Activated CD4-positive, alpha-beta T cell treated with anti-CD3 and anti-CD28 coated beads for 36 hours (primary cell): ENCODE measurements at regions of chr7 and their contacts with region 1.

Region 1: DNA sequence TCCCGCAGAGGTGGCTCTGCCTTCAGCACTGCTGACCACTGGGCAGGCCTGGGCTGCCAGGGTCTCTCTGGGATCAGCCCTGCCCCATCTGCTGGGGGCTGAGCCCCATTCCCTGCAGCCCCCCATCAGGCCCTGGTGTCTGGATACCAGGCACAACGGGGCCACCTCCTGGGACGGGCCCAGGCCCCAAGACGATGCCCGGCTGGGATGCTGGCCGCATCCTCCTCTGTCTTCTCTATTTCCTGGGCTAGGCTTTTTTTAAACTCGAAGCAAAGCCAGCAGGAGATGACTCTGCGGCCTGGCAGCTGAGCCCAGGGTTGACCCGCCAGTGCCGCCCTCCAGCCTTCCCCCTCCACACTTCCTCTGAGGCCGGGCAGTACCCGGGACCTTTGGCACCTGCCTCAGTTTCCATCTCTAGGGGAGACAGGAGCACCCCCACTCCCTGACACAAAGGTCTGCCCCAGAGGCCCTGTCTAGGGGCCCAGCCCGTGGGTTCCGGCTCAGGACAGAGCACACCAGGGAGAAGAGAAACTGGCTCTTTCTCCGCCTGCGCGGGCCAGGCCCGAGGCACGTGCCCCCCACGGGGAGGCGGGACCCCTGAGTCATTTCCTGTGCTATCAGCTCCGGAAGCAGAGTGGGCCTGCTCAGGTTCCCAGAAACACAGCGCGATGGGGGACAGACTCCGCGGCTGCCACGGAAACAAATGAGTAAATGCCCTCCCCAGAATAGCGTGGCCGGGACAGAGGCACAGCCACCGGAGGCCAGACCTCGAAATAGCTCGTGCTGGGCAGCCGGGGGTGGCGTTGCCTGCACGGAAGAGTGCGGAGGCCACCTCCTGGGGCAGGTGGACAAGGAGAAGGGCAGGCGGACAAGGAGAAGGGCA is 84.6 kb upstream of the PDGFA start:
- DNase-seq: peak; percentile 97
- ATAC-seq: peak; percentile 59
- H3K4me3 Mint-ChIP-seq: peak overlapping the region; percentile 78
- H3K27ac Mint-ChIP-seq: peak overlapping the region; percentile 100
- H3K4me1 Mint-ChIP-seq: peaks cover 68% of the 10 kb centered on the region
- H3K27me3 Mint-ChIP-seq: no peaks in the 10 kb centered on the region

Region 2: GRCh38 chr7:362402-363096 is 241.7 kb before region 1 on chr7:
- CTCF ChIA-PET with region 1: no interaction called
- POLR2A ChIA-PET with region 1: no interaction called
- intact Hi-C with region 1: loop called (anchors 5 kb)
- DNase-seq: peak; percentile 67
- ATAC-seq: peak; percentile 65
- H3K4me3 Mint-ChIP-seq: peak overlapping the region; percentile 62
- H3K27ac Mint-ChIP-seq: peak overlapping the region; percentile 90
- H3K4me1 Mint-ChIP-seq: peaks cover 67% of the 10 kb centered on the region
- H3K27me3 Mint-ChIP-seq: no peaks in the 10 kb centered on the region

Region 3: GRCh38 chr7:418647-419280 is 185.5 kb before region 1 on chr7:
- CTCF ChIA-PET with region 1: no interaction called
- POLR2A ChIA-PET with region 1: no interaction called
- intact Hi-C with region 1: no loop called
- DNase-seq: no peak
- ATAC-seq: no peak
- H3K4me3 Mint-ChIP-seq: no peak overlapping the region
- H3K27ac Mint-ChIP-seq: no peak overlapping the region
- H3K4me1 Mint-ChIP-seq: no peaks in the 10 kb centered on the region
- H3K27me3 Mint-ChIP-seq: no peaks in the 10 kb centered on the region

Region 4: DNA sequence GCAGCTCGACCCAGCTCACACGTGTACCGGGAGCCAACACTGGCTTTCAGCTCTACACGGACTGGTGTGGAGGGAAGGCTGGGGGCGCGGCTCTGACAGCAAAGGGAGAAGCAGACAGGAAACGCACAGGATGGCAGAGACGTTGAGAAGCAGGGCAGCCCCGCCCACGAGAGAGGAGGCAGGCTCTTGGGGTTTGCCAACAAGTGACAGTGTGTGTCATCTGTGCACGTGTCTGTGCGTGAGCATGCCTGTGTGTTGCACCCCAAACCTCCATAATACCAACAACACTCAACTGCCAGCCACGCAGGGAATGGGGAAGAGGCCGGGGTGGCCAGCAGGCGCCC is 20.1 kb before region 1 on chr7:
- CTCF ChIA-PET with region 1: interaction called, 3 read pairs
- POLR2A ChIA-PET with region 1: interaction called, 4 read pairs
- intact Hi-C with region 1: loop called (anchors 1 kb)
- DNase-seq: peak; percentile 95
- ATAC-seq: peak; percentile 90
- H3K4me3 Mint-ChIP-seq: peak overlapping the region; percentile 77
- H3K27ac Mint-ChIP-seq: peak overlapping the region; percentile 96
- H3K4me1 Mint-ChIP-seq: peaks cover 37% of the 10 kb centered on the region
- H3K27me3 Mint-ChIP-seq: no peaks in the 10 kb centered on the region

Region 5: DNA sequence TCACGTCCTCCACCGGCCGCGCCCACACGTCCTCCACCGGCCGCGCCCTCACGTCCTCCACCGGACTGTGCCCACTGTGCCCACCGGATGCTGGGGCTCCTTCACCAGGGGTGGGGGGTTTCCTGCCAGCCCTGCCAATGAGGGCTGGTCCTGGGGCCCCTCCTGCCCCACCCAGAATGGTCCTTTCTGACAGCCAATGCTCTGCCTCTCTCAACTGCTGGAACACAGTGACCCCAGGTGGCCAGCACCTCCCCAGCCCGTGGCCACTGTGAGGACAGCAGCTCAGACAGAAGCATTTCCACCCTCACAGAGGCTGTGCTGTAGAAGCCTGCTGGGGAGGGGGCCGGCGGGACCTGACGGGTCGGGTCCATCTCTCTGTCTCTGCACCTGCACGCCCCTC is 32.2 kb after region 1 on chr7:
- CTCF ChIA-PET with region 1: no interaction called
- POLR2A ChIA-PET with region 1: no interaction called
- intact Hi-C with region 1: loop called in 1 of 2 experiments (anchors 1 kb)
- DNase-seq: peak; percentile 64
- ATAC-seq: peak; percentile 66
- H3K4me3 Mint-ChIP-seq: no peak overlapping the region
- H3K27ac Mint-ChIP-seq: peak overlapping the region; percentile 37
- H3K4me1 Mint-ChIP-seq: peaks cover 19% of the 10 kb centered on the region
- H3K27me3 Mint-ChIP-seq: no peaks in the 10 kb centered on the region

Region 6: DNA sequence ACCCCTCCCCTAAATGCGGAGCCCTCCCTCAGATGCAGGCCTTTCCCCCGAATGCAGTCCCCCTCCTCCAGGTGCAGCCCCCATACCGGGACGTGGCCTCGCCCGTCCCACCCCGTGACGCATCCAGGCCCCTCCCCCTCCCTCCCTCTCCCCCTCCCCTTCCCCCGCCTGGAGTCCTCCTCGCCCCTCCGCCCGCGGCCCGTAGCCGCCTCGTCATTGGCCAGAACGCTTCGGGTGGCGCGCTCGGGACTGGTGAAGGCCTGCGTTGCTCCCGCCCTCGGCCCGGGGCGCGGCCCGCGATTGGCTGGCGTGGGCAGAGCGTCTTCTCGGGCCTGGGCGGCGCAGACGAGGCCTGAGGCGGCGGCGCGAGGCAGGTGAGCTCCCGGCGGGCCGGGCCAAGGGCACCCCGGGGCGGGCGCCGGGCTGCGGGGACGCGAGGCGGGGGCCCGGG is 212.1 kb after region 1 on chr7:
- CTCF ChIA-PET with region 1: no interaction called
- POLR2A ChIA-PET with region 1: no interaction called
- intact Hi-C with region 1: loop called in 1 of 2 experiments (anchors 1 kb)
- DNase-seq: peak; percentile 99
- ATAC-seq: peak; percentile 97
- H3K4me3 Mint-ChIP-seq: peak overlapping the region; percentile 60
- H3K27ac Mint-ChIP-seq: no peak overlapping the region
- H3K4me1 Mint-ChIP-seq: peaks cover 62% of the 10 kb centered on the region
- H3K27me3 Mint-ChIP-seq: peaks cover 6% of the 10 kb centered on the region

Region 7: GRCh38 chr7:923108-924041 is 319.1 kb after region 1 on chr7:
- CTCF ChIA-PET with region 1: no interaction called
- POLR2A ChIA-PET with region 1: no interaction called
- intact Hi-C with region 1: loop called in 1 of 2 experiments (anchors 5 kb)
- DNase-seq: peak; percentile 97
- ATAC-seq: peak; percentile 92
- H3K4me3 Mint-ChIP-seq: peak overlapping the region; percentile 72
- H3K27ac Mint-ChIP-seq: peak overlapping the region; percentile 93
- H3K4me1 Mint-ChIP-seq: peaks cover 39% of the 10 kb centered on the region
- H3K27me3 Mint-ChIP-seq: no peaks in the 10 kb centered on the region

Region 8: DNA sequence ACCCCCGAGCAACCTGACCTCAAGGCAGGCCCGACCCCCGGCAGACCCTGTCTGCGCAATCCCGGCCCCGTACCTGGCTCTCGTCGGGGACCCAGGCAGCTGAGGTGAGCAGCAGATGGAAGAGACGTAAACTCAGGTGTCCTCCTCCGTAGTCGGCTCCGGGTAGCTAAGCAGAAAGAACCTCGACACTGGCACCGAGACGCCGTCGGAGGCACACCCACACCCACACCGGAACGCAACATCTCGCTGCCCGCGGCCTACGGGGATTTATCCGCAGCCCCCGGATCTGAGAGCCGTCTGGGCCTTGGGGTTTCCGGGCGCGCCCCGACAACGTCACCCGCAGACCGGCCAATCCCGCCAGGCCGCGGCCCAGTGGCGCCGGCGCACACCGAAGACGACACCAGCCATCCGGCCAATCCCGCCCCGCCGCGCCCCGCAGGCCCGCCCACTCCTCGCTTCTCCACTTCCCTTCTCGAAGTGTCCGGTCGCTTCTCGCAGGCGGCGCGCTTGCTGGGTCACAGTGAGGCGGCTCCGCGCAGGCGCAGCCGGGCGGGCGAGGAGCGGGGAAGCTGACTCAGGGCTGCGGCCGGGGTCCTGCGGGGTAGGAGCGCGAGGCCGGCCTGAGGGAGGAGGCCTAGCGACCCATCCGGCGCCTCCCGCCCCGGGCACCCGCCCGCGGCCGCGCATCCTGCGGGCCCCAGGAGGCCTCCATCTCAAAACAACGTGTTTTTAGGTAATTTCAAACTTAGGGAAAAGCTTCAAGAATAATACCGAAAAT is 555.8 kb after region 1 on chr7 and contains the start of gene ZFAND2A:
- CTCF ChIA-PET with region 1: no interaction called
- POLR2A ChIA-PET with region 1: no interaction called
- intact Hi-C with region 1: loop called in 1 of 2 experiments (anchors 10 kb)
- DNase-seq: peak; percentile 99
- ATAC-seq: peak; percentile 98
- H3K4me3 Mint-ChIP-seq: peak within 1 kb of the TSS; percentile 84
- H3K27ac Mint-ChIP-seq: peak within 1 kb of the TSS; percentile 90
- H3K4me1 Mint-ChIP-seq: peaks cover 22% of the 10 kb centered on the region
- H3K27me3 Mint-ChIP-seq: no peaks in the 10 kb centered on the region
- total RNA-seq, gene ZFAND2A: 21.6 to 25.2 TPM